Activated B cell treated with CpG ODN at 0.5 μM for 24 hours (primary cell): ENCODE measurements at regions of chr11 and their contacts with region 1.

Region 1: DNA sequence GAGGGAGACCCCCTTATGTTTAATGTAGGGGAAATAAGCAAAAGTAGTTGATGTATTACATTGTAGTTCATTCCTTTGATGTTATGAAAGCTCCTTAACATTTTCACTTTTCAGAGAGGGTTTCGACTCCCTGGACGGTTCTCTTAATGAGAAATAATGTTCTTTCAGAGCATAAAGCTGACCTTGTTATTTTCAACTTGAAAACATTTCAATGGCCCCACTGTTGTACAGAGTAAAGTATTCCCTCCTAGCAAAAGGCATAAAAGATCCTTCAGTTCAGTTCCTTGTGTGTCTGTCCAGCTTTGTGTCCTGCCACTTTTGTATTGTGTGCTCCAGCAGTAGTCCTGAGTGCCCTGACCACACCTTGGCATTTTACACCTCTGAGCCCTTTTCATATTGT is 63.9 kb downstream of the UVRAG start:
- DNase-seq: no peak
- ATAC-seq: no peak
- H3K4me3 Mint-ChIP-seq: no peak overlapping the region
- H3K27ac Mint-ChIP-seq: peak overlapping the region; percentile 16
- H3K4me1 Mint-ChIP-seq: peaks cover 40% of the 10 kb centered on the region
- H3K27me3 Mint-ChIP-seq: no peaks in the 10 kb centered on the region
- CTCF ChIP-seq: no peak

Region 2: DNA sequence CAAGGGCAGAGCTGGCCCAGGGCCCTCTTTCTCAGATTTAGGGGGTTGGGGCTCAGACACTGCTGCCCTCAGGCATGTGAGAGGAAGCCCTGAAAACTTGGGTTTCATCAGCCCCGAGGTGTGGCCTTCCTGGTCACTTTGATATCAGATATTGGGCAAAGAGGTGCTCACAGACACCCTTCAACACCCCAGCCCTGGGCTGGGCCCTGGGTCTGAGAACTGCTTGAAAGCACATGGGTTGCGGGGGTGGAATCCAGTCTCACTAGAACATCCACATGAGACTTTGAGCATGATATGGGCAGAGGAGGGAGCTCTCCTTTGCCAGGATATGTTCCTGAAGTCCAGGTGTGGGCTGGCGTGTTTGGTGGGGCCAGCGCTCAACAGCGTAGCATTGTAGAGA is 100.0 kb before region 1 on chr11:
- CTCF ChIA-PET with region 1: no interaction called
- POLR2A ChIA-PET with region 1: interaction called, 13 read pairs
- intact Hi-C with region 1: no loop called
- DNase-seq: no peak
- ATAC-seq: no peak
- H3K4me3 Mint-ChIP-seq: no peak overlapping the region
- H3K27ac Mint-ChIP-seq: no peak overlapping the region
- H3K4me1 Mint-ChIP-seq: peaks cover 42% of the 10 kb centered on the region
- H3K27me3 Mint-ChIP-seq: no peaks in the 10 kb centered on the region
- CTCF ChIP-seq: no peak

Region 3: GRCh38 chr11:76152086-76152681 is 273.3 kb after region 1 on chr11:
- CTCF ChIA-PET with region 1: interaction called, 5 read pairs
- POLR2A ChIA-PET with region 1: interaction called, 10 read pairs
- intact Hi-C with region 1: no loop called
- DNase-seq: peak; percentile 68
- ATAC-seq: peak; percentile 88
- H3K4me3 Mint-ChIP-seq: peak overlapping the region; percentile 80
- H3K27ac Mint-ChIP-seq: peak overlapping the region; percentile 41
- H3K4me1 Mint-ChIP-seq: peaks cover 22% of the 10 kb centered on the region
- H3K27me3 Mint-ChIP-seq: no peaks in the 10 kb centered on the region
- CTCF ChIP-seq: no peak

Region 4: GRCh38 chr11:76768088-76768908 is 889.4 kb after region 1 on chr11:
- CTCF ChIA-PET with region 1: no interaction called
- POLR2A ChIA-PET with region 1: no interaction called
- intact Hi-C with region 1: no loop called
- DNase-seq: no peak
- ATAC-seq: no peak
- H3K4me3 Mint-ChIP-seq: no peak overlapping the region
- H3K27ac Mint-ChIP-seq: no peak overlapping the region
- H3K4me1 Mint-ChIP-seq: peaks cover 2% of the 10 kb centered on the region
- H3K27me3 Mint-ChIP-seq: peaks cover 15% of the 10 kb centered on the region
- CTCF ChIP-seq: no peak